Transverse colon (tissue), 4 donors: ENCODE measurements at regions of chr19 and their contacts with region 1.

Region 1: GRCh38 chr19:15629003-15629880 is 11.5 kb upstream of the CYP4F3 start:
- DNase-seq: peak; percentile 92
- H3K4me3 ChIP-seq: peak overlapping the region in 1 of 4 donors; percentile 6
- H3K27ac ChIP-seq: no peak overlapping the region
- H3K4me1 ChIP-seq: peaks cover 0 to 4% (median 0%) of the 10 kb centered on the region in 4 donors
- H3K27me3 ChIP-seq: peaks cover 4% of the 10 kb centered on the region
- CTCF ChIP-seq: peak; percentile 97 to 99 (median 99)
- EP300 ChIP-seq: no peak
- POLR2A ChIP-seq: no peak

Region 2: DNA sequence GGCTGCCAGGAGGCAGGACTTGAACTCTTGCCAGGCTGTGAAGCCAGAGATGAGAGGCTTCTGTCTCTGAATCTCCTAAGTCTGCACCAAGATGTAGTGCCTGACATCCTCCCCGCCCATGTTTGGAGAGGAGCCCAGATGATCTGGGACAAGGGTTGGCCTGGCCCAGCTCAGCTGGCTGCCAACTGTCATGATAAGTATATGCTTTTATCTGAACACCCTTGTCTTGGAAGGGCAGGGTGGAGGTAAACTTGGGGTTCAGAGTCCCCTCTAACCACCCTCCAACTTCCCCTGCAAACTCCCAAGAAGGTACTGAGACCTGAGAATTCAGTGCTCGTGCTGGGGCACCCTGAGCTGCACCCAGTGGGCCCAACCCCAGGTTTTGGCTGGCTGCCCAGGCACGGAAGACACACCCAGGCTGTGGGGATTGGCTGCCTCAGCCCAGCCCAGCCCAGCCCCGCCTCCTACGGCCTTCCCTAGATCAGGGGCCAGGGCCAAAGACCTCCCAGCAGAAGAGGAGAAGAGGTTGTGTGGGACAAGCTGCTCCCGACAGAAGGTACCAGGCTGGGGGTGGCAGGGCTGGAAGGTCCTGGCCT is 43.4 kb after region 1 on chr19 and contains the start of gene CYP4F12:
- in situ Hi-C with region 1: no loop called
- intact Hi-C with region 1: no loop called
- DNase-seq: peak; percentile 96
- H3K4me3 ChIP-seq: peak within 1 kb of the TSS in 3 of 4 donors; percentile 18 to 47 (median 22)
- H3K27ac ChIP-seq: peak within 1 kb of the TSS; percentile 85 to 88 (median 87)
- H3K4me1 ChIP-seq: peaks cover 7 to 23% (median 18%) of the 10 kb centered on the region in 4 donors
- H3K27me3 ChIP-seq: no peaks in the 10 kb centered on the region
- CTCF ChIP-seq: no peak
- EP300 ChIP-seq: peak; percentile 19
- POLR2A ChIP-seq: peak; percentile 85
- total RNA-seq, gene CYP4F12: 229 to 406 (median 273) TPM

Region 3: DNA sequence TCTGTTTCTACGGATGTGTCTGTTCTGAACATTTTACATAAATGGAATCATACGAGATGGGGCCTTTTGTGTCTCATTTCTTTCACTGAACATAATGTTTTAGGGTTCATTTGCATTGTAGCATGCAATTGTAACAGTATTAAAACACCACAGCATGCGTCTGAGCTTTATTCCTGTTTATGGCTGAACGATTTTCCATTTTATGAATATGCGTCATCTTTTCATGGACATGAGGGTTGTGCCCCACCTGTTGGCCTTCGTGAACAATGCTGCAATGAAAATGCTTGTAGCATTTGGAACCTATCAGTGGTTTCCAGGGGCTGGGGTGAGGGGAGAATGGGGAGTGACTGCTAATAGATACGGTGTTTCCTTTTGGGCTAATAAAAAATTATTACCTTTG is 181.1 kb after region 1 on chr19:
- in situ Hi-C with region 1: loop called in 2 of 4 experiments (anchors 25 kb)
- intact Hi-C with region 1: loop called (anchors 2 kb)
- DNase-seq: peak; percentile 46
- H3K4me3 ChIP-seq: no peak overlapping the region
- H3K27ac ChIP-seq: no peak overlapping the region
- H3K4me1 ChIP-seq: peaks cover 0 to 2% (median 0%) of the 10 kb centered on the region in 4 donors
- H3K27me3 ChIP-seq: peaks cover 39% of the 10 kb centered on the region
- CTCF ChIP-seq: peak; percentile 45 to 75 (median 51)
- EP300 ChIP-seq: no peak
- POLR2A ChIP-seq: no peak

Region 4: GRCh38 chr19:15871570-15871969 is 242.3 kb after region 1 on chr19:
- in situ Hi-C with region 1: no loop called
- intact Hi-C with region 1: loop called (anchors 10 kb)
- DNase-seq: peak; percentile 11
- H3K4me3 ChIP-seq: no peak overlapping the region
- H3K27ac ChIP-seq: no peak overlapping the region
- H3K4me1 ChIP-seq: no peaks in the 10 kb centered on the region
- H3K27me3 ChIP-seq: peaks cover 33% of the 10 kb centered on the region
- CTCF ChIP-seq: no peak
- EP300 ChIP-seq: no peak
- POLR2A ChIP-seq: no peak